MCF 10A (cell line): ENCODE measurements at regions of chr1 and their contacts with region 1.

Region 1: GRCh38 chr1:47906009-47906432 is 91.2 kb downstream of the TRABD2B start:
- DNase-seq: peak; percentile 77
- H3K4me3 Mint-ChIP-seq: no peak overlapping the region
- H3K27ac Mint-ChIP-seq: peak overlapping the region; percentile 76
- H3K4me1 Mint-ChIP-seq: peaks cover 40% of the 10 kb centered on the region
- H3K27me3 Mint-ChIP-seq: no peaks in the 10 kb centered on the region
- CTCF ChIP-seq: no peak

Region 2: DNA sequence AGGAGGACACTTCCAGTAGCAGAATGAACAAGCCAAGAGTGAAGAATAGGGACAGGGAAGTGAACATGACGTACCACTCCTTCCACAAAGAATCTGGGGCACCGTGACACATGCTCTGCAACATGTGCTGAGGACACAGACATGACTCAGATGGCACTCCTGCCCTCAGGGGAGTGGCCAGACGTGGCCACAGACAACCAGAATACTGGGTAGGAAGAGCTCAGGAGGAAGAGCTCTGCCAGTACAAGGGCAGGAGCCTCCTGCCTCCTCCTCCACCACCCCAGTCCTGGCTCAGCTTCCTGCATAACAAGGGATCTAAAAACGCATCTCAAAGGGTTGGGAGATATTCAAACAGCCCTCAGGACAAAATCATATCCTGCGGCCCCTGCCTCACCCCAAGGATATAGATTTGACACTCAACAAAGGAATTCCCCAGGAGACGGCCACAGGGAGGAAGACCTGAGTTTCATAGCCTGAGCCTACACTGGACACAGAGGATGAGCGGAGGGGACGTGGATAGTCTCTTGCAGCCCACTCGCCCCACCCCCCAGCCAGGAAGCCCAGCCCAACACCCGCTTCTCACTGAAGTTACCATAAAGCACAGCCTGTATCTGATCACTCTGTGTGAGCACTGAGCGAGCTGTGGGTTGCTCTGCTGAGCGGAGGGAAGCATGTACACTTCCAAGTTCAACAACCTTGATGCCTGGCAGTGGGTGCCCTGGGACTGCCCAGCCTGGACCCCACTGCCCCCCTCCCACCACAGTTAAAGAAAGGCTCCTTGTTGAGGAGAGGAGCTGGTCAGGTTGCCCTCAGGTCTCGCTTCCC is 11.1 kb before region 1 on chr1:
- CTCF ChIA-PET with region 1: interaction called, 4 read pairs
- POLR2A ChIA-PET with region 1: interaction called, 13 read pairs
- intact Hi-C with region 1: no loop called
- DNase-seq: peak; percentile 85
- H3K4me3 Mint-ChIP-seq: peak overlapping the region; percentile 19
- H3K27ac Mint-ChIP-seq: peak overlapping the region; percentile 82
- H3K4me1 Mint-ChIP-seq: peaks cover 13% of the 10 kb centered on the region
- H3K27me3 Mint-ChIP-seq: no peaks in the 10 kb centered on the region
- CTCF ChIP-seq: no peak